ENCODE measurements at regions of chr6 and their contacts with region 1.

Region 1: GRCh38 chr6:131199568-131200272 is 64.5 kb downstream of the AKAP7 start:
- DNase-seq: peak; percentile 58 to 95 (median 68)
- ATAC-seq: peak; percentile 92
- H3K4me3 ChIP-seq: peak overlapping the region; percentile 43
- H3K4me3 Mint-ChIP-seq: peak overlapping the region; percentile 84
- H3K27ac ChIP-seq: peak overlapping the region; percentile 72 to 80
- H3K27ac Mint-ChIP-seq: peak overlapping the region; percentile 98
- H3K4me1 ChIP-seq: peaks cover 40% of the 10 kb centered on the region
- H3K4me1 Mint-ChIP-seq: peaks cover 68% of the 10 kb centered on the region
- H3K27me3 ChIP-seq: no peaks in the 10 kb centered on the region
- H3K27me3 Mint-ChIP-seq: no peaks in the 10 kb centered on the region
- CTCF ChIP-seq: peak; percentile 76

Region 2: GRCh38 chr6:130843575-130844320 is 356.0 kb before region 1 on chr6:
- CTCF ChIA-PET with region 1: no interaction called
- POLR2A ChIA-PET with region 1: no interaction called
- intact Hi-C with region 1: no loop called
- DNase-seq: peak in 4 of 14 experiments; percentile 3 to 76 (median 72)
- ATAC-seq: peak; percentile 87
- H3K4me3 ChIP-seq: no peak overlapping the region
- H3K4me3 Mint-ChIP-seq: no peak overlapping the region
- H3K27ac ChIP-seq: no peak overlapping the region
- H3K27ac Mint-ChIP-seq: no peak overlapping the region
- H3K4me1 ChIP-seq: no peaks in the 10 kb centered on the region
- H3K4me1 Mint-ChIP-seq: peaks cover 2% of the 10 kb centered on the region
- H3K27me3 ChIP-seq: no peaks in the 10 kb centered on the region
- H3K27me3 Mint-ChIP-seq: no peaks in the 10 kb centered on the region
- CTCF ChIP-seq: peak; percentile 66

Region 3: GRCh38 chr6:131159608-131160007 is 40.1 kb before region 1 on chr6:
- CTCF ChIA-PET with region 1: no interaction called
- POLR2A ChIA-PET with region 1: no interaction called
- intact Hi-C with region 1: no loop called
- DNase-seq: no peak
- ATAC-seq: no peak
- H3K4me3 ChIP-seq: no peak overlapping the region
- H3K4me3 Mint-ChIP-seq: no peak overlapping the region
- H3K27ac ChIP-seq: no peak overlapping the region
- H3K27ac Mint-ChIP-seq: no peak overlapping the region
- H3K4me1 ChIP-seq: no peaks in the 10 kb centered on the region
- H3K4me1 Mint-ChIP-seq: no peaks in the 10 kb centered on the region
- H3K27me3 ChIP-seq: no peaks in the 10 kb centered on the region
- H3K27me3 Mint-ChIP-seq: no peaks in the 10 kb centered on the region
- CTCF ChIP-seq: no peak

Region 4: DNA sequence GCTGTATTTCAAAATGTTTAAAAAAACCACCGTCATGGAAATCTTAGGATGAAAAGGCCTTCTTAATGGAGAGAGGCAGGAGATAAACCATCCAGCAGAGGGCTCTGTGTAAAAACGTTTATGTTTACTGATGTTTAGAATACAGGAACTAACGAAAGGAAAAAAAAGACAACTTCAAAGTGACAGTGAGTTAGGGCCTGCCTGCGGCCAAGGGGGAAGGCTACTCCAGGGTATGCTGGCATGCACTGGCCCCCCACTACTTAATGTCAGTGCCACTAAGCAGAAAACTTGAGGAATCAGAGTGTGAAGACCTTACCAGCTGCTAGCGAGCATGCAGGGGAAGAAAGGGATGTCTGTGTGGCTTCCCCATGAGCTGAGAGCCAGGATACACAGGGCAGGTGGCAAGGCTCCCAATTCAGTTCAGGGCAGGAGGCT is 16.7 kb before region 1 on chr6:
- CTCF ChIA-PET with region 1: interaction called, 12 read pairs
- POLR2A ChIA-PET with region 1: interaction called, 47 read pairs
- intact Hi-C with region 1: loop called in 1 of 2 experiments (anchors 2 kb)
- DNase-seq: peak in 6 of 14 experiments; percentile 0 to 71 (median 57)
- ATAC-seq: peak; percentile 91
- H3K4me3 ChIP-seq: no peak overlapping the region
- H3K4me3 Mint-ChIP-seq: peak overlapping the region; percentile 81
- H3K27ac ChIP-seq: no peak overlapping the region
- H3K27ac Mint-ChIP-seq: peak overlapping the region; percentile 87
- H3K4me1 ChIP-seq: peaks cover 12% of the 10 kb centered on the region
- H3K4me1 Mint-ChIP-seq: peaks cover 20% of the 10 kb centered on the region
- H3K27me3 ChIP-seq: no peaks in the 10 kb centered on the region
- H3K27me3 Mint-ChIP-seq: no peaks in the 10 kb centered on the region
- CTCF ChIP-seq: peak; percentile 81

Region 5: DNA sequence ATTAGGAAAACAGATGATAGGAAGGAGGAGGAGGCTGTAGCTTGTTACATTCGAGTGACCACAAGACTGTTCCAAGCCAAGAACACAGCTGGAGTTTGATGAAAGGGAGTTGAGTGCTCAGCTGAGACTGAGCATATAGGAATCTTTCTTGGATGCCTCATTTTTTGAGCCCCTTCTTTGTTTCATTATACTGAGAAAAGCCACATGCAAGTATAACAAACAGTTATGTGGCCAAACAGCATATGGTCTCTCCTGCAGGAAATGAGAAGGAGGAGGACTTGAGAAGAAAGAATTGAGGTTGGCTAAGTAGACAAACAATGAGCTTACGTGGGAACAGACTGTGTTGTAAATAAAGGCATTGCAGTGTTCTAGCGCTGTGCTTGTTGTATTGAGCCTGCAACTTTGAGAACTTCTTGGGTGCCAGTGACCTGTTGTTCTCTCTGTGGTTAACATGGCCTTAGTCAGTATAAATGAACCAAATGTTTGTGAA is 13.8 kb after region 1 on chr6:
- CTCF ChIA-PET with region 1: interaction called, 16 read pairs
- POLR2A ChIA-PET with region 1: interaction called, 16 read pairs
- intact Hi-C with region 1: loop called in 1 of 2 experiments (anchors 2 kb)
- DNase-seq: peak in 1 of 14 experiments; percentile 20
- ATAC-seq: no peak
- H3K4me3 ChIP-seq: no peak overlapping the region
- H3K4me3 Mint-ChIP-seq: peak overlapping the region; percentile 52
- H3K27ac ChIP-seq: no peak overlapping the region
- H3K27ac Mint-ChIP-seq: peak overlapping the region; percentile 63
- H3K4me1 ChIP-seq: peaks cover 15% of the 10 kb centered on the region
- H3K4me1 Mint-ChIP-seq: peaks cover 64% of the 10 kb centered on the region
- H3K27me3 ChIP-seq: no peaks in the 10 kb centered on the region
- H3K27me3 Mint-ChIP-seq: no peaks in the 10 kb centered on the region
- CTCF ChIP-seq: no peak

Region 6: GRCh38 chr6:131250122-131250521 is 50.4 kb after region 1 on chr6:
- CTCF ChIA-PET with region 1: interaction called, 3 read pairs
- POLR2A ChIA-PET with region 1: interaction called, 14 read pairs
- intact Hi-C with region 1: loop called in 1 of 2 experiments (anchors 10 kb)
- DNase-seq: peak in 8 of 14 experiments; percentile 8 to 53 (median 28)
- ATAC-seq: peak; percentile 90
- H3K4me3 ChIP-seq: peak overlapping the region; percentile 23
- H3K4me3 Mint-ChIP-seq: peak overlapping the region; percentile 76
- H3K27ac ChIP-seq: no peak overlapping the region
- H3K27ac Mint-ChIP-seq: peak overlapping the region; percentile 43
- H3K4me1 ChIP-seq: no peaks in the 10 kb centered on the region
- H3K4me1 Mint-ChIP-seq: peaks cover 66% of the 10 kb centered on the region
- H3K27me3 ChIP-seq: no peaks in the 10 kb centered on the region
- H3K27me3 Mint-ChIP-seq: no peaks in the 10 kb centered on the region
- CTCF ChIP-seq: no peak

Region 7: GRCh38 chr6:132587424-132587823 is 1387.7 kb after region 1 on chr6:
- CTCF ChIA-PET with region 1: no interaction called
- POLR2A ChIA-PET with region 1: no interaction called
- intact Hi-C with region 1: no loop called
- DNase-seq: peak in 2 of 14 experiments; percentile 19 to 34
- ATAC-seq: no peak
- H3K4me3 ChIP-seq: no peak overlapping the region
- H3K4me3 Mint-ChIP-seq: no peak overlapping the region
- H3K27ac ChIP-seq: no peak overlapping the region
- H3K27ac Mint-ChIP-seq: no peak overlapping the region
- H3K4me1 ChIP-seq: no peaks in the 10 kb centered on the region
- H3K4me1 Mint-ChIP-seq: no peaks in the 10 kb centered on the region
- H3K27me3 ChIP-seq: peaks cover 4% of the 10 kb centered on the region in 2 experiments
- H3K27me3 Mint-ChIP-seq: peaks cover 35% of the 10 kb centered on the region
- CTCF ChIP-seq: no peak

Measured in CD4-positive, alpha-beta T cell (primary cell).